Head of caudate nucleus (tissue), 42 donors: ENCODE measurements at regions of chr18 and their contacts with region 1.

Region 1: GRCh38 chr18:24397694-24398365 is at the start of gene OSBPL1A:
- DNase-seq: peak; percentile 72 to 98 (median 93)

Region 2: DNA sequence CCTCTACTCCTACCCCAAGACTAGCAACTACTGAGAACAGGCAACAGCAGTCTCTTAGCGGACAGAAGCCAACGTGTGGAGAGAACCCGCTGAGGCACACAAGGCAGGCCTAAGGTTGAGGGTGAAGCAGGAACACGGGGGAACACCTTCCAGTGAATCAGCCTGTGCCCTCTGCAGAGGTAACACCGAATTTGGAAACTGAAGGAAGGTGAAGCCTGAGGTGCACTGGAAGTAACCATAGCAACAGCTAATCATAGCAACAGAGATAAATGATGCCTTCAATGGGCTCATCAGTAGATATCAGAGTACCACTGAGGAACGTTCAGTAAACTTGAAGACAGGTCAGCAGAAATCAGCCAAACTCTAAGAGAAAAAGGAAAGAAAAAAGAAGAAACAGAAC is 43.5 kb before region 1 on chr18:
- intact Hi-C with region 1: loop called (anchors 10 kb)
- DNase-seq: peak in 20 of 42 donors; percentile 8 to 68 (median 30)

Region 3: GRCh38 chr18:24426398-24427294 is 28.8 kb after region 1 on chr18 and contains the start of gene IMPACT:
- intact Hi-C with region 1: loop called (anchors 2 kb)
- DNase-seq: peak; percentile 32 to 92 (median 84)

Region 4: GRCh38 chr18:24446953-24447538 is 49.2 kb after region 1 on chr18:
- intact Hi-C with region 1: no loop called
- DNase-seq: no peak

Region 5: GRCh38 chr18:24543805-24544498 is 146.1 kb after region 1 on chr18:
- intact Hi-C with region 1: no loop called
- DNase-seq: peak in 1 of 42 donors; percentile 19